ENCODE measurements at regions of chr6 and their contacts with region 1.

Region 1: DNA sequence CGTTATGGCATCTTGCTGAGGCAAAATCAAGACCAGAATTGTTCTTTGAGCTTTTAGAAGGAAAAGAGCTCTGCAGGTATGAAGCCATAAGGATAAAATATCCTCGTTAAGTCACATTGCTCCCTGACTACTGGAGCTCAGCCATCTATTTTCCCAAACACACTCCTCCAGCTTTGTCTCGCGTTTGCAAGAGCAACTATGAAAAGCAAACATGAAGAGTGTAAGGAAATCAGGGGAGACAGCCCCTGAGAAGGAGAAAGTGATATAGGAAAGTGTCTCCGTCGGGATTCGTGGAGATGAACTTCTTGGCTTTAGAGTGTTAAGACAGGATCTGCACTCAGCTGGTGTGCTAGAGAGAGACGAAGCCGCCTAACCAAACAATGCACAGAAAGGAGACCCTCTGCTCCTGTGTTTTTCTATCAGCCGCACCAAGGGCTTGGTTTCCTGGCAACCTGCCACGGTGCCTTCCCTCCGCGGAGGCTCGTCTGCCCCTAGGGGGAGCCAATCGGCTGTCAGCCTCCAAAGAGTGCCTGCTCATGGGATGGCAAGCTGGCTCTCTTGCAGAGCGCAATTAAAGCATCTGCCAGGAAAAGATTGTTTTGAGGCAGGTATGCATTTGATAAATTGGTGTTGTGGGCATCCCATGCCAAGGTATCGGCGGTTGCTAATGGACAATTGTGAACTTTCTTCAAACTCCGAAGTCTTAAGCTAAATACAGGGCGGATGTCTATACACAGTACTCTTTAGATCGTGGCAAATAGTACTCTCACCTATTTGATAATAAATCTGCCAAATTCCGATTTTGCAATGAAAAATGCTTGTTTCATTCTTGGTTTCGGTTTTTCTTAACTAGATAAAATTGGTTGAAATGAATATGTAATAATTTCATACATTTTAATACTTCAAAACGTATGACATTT is 603.2 kb downstream of the RNF144B start:
- DNase-seq: peak; percentile 69 to 92
- H3K4me3 ChIP-seq: peak overlapping the region in 1 of 4 experiments; percentile 24; a peak in 3 of 8 replicates
- H3K27ac ChIP-seq: no peak overlapping the region
- H3K4me1 ChIP-seq: peaks cover 0 to 4% (median under 1%) of the 10 kb centered on the region in 4 experiments; a peak in 2 of 7 replicates
- H3K27me3 ChIP-seq: no peaks in the 10 kb centered on the region
- CTCF ChIP-seq: peak; percentile 77 to 89 (median 82)
- EP300 ChIP-seq: no peak
- POLR2A ChIP-seq: no peak
- RAD21 ChIP-seq: peak; percentile 75 to 80

Region 2: GRCh38 chr6:18595774-18596530 is 394.4 kb before region 1 on chr6:
- CTCF ChIA-PET with region 1: interaction called, 20 read pairs
- POLR2A ChIA-PET with region 1: no interaction called
- DNase-seq: peak; percentile 47 to 84
- H3K4me3 ChIP-seq: no peak overlapping the region
- H3K27ac ChIP-seq: no peak overlapping the region
- H3K4me1 ChIP-seq: no peaks in the 10 kb centered on the region
- H3K27me3 ChIP-seq: no peaks in the 10 kb centered on the region
- CTCF ChIP-seq: peak; percentile 68 to 91 (median 84)
- EP300 ChIP-seq: no peak
- POLR2A ChIP-seq: no peak
- RAD21 ChIP-seq: peak; percentile 99

Region 3: DNA sequence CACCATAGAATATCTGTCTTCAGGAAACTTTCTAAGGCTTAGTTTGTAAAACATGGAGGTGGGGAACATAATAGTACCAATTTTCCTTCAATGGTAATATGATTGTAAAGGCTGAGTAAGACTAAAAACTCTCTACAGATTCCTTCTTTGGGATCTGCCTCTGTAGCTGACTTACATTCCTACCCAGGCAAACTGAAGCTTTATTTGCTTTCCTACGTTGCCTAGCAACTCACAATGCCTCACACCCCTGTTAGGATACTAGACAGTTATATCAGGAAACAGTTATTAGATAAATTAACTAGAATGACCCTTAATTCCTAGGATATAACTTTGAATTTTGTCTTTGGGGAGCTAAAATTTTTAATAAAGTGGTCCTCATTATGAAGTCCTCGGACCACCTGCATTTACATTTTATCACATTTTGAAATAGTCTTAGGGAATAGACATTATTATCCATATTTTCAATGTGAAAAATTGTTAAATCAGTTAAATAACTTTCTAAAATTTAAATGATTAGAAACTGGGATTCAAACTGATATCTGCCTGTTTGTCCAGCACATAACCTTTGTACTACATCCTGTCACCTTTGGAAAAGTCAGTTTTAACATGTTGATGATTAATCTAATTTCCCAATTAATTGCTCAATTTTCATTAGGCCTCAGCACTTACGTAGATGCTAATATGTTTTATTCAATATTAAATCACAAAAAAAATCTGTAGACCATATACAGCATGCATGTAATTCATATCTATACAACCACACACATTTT is 11.8 kb before region 1 on chr6:
- CTCF ChIA-PET with region 1: interaction called, 21 read pairs
- POLR2A ChIA-PET with region 1: interaction called, 5 read pairs
- DNase-seq: no peak
- H3K4me3 ChIP-seq: no peak overlapping the region
- H3K27ac ChIP-seq: no peak overlapping the region
- H3K4me1 ChIP-seq: 0 out of 7 replicates have a peak, but pooled peaks cover 0 to 2% (median 0%) of the 10 kb centered on the region in 4 experiments
- H3K27me3 ChIP-seq: no peaks in the 10 kb centered on the region
- CTCF ChIP-seq: no peak
- EP300 ChIP-seq: no peak
- POLR2A ChIP-seq: no peak
- RAD21 ChIP-seq: no peak

Region 4: DNA sequence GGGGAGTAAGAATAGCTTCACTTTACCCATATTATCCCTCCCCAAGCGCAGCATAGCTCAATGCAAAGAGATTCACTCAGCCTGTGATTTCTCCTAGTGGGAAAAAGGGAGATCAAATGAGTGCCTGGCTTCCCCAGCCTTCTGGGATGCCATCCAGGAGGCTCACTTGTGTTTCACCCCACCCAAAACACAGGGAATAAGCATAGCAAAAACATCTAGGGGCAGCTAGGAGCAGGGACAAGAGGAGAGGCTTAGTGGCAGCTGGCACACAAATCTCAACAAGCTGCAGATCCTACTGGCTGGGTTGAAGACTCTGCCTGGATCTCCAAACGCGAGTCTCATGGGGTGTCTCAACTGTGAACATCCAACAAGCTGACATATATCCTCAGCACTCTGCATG is 112.6 kb after region 1 on chr6:
- CTCF ChIA-PET with region 1: no interaction called
- POLR2A ChIA-PET with region 1: no interaction called
- DNase-seq: no peak
- H3K4me3 ChIP-seq: no peak overlapping the region
- H3K27ac ChIP-seq: no peak overlapping the region
- H3K4me1 ChIP-seq: no peaks in the 10 kb centered on the region
- H3K27me3 ChIP-seq: no peaks in the 10 kb centered on the region
- CTCF ChIP-seq: no peak
- EP300 ChIP-seq: no peak
- POLR2A ChIP-seq: no peak
- RAD21 ChIP-seq: no peak

Measured in H1 (cell line).